ENCODE measurements at regions of chr11 and their contacts with region 1.

Region 1: GRCh38 chr11:45655347-45655756 is 10.1 kb downstream of the CHST1 start:
- DNase-seq: peak; percentile 50 to 91 (median 80)
- H3K4me3 ChIP-seq: no peak overlapping the region
- H3K27ac ChIP-seq: peak overlapping the region in 2 of 5 donors; percentile 8 to 32
- H3K4me1 ChIP-seq: peaks cover 0 to 19% of the 10 kb centered on the region in 2 donors
- H3K27me3 ChIP-seq: peaks cover 11% of the 10 kb centered on the region
- CTCF ChIP-seq: peak; percentile 72 to 95 (median 88)
- POLR2A ChIP-seq: no peak

Region 2: DNA sequence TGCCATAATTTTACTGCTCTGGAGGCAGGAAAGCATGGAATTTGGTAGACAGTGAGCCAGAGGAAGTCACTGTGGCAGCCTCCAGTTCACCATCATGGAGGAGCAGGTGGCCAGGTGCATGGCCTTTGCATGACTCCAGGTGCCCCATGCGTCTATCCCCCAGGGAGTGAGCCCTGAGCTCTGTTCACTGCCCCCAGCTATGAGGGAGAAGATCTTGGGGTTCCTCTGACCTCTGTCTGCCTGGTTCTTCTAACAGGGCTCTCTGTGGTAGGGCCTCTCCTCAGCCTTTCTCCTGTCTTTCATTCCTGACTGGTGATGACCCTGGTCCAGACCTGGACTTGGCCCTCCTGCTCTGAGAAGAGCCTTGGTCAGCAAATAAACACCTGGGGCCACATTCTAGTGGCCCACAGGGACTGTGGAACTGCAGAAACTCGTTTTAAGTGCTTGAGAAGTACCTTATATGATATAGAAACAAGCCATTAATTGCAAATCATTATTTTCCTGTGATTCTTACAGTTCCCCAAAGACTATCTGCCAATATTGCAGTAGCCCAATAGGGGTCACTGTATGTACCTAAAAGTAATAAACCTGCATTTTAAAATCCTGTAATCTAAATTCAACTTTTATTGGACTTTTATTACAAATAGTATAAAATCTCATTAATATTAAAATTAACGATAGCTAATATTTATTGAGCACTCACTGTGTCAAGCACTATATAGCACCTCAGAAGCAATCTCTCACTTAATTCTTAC is 249.3 kb before region 1 on chr11:
- intact Hi-C with region 1: loop called in 1 of 2 experiments (anchors 2 kb)
- DNase-seq: no peak
- H3K4me3 ChIP-seq: no peak overlapping the region
- H3K27ac ChIP-seq: no peak overlapping the region
- H3K4me1 ChIP-seq: no peaks in the 10 kb centered on the region
- H3K27me3 ChIP-seq: peaks cover 4% of the 10 kb centered on the region
- CTCF ChIP-seq: peak; percentile 35 to 67 (median 57)
- POLR2A ChIP-seq: no peak

Region 3: DNA sequence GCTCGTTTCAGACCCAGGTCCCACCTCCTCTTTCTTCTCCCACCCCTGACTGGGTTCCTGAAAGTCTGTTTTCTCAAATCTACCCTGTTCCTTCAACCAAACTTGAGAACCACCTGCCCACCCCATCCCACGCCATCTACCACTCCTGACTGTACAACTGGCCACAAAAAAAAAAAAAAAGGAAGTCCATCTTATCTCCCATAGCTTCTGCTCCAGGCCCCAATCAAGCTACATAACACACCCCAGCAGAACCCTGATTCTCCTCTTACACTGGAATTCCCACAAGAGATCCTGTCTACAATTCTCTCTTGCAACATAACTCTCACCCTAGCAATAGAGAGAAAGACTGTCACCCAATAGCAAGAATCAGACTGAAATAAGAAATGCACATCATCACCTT is 49.3 kb after region 1 on chr11:
- intact Hi-C with region 1: no loop called
- DNase-seq: no peak
- H3K4me3 ChIP-seq: no peak overlapping the region
- H3K27ac ChIP-seq: no peak overlapping the region
- H3K4me1 ChIP-seq: no peaks in the 10 kb centered on the region
- H3K27me3 ChIP-seq: peaks cover 4% of the 10 kb centered on the region
- CTCF ChIP-seq: no peak
- POLR2A ChIP-seq: no peak

Region 4: DNA sequence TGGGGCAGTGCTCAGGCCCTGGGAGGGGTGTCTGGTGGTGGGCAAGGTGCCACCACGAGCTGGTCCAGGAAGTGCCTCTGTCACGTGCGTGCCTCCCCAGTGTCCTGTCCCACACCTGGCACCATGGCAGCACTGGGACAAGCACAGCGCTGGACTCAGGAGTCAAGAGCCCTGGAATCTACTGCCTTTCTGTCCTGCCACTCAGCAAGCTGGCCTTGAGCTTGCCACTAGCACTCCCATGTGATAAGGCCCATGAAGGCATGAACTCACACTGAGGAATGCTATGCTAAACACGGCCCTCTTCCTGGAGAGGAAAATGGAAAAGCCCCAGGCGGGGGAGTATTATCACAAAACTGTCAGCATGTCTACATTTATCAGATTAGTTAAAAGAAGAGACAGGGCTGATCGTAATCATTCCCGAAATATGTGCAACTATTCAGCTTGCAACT is 98.9 kb after region 1 on chr11:
- intact Hi-C with region 1: loop called in 1 of 2 experiments (anchors 10 kb)
- DNase-seq: peak; percentile 28 to 84 (median 81)
- H3K4me3 ChIP-seq: no peak overlapping the region
- H3K27ac ChIP-seq: no peak overlapping the region
- H3K4me1 ChIP-seq: peaks cover 0 to 11% of the 10 kb centered on the region in 2 donors
- H3K27me3 ChIP-seq: no peaks in the 10 kb centered on the region
- CTCF ChIP-seq: no peak
- POLR2A ChIP-seq: no peak

Region 5: GRCh38 chr11:45771566-45772448 is 116.5 kb after region 1 on chr11:
- intact Hi-C with region 1: loop called in 1 of 2 experiments (anchors 5 kb)
- DNase-seq: peak; percentile 76 to 92 (median 87)
- H3K4me3 ChIP-seq: peak overlapping the region in 2 of 4 donors; percentile 15 to 54
- H3K27ac ChIP-seq: peak overlapping the region in 2 of 5 donors; percentile 10 to 36
- H3K4me1 ChIP-seq: no peaks in the 10 kb centered on the region
- H3K27me3 ChIP-seq: no peaks in the 10 kb centered on the region
- CTCF ChIP-seq: peak; percentile 84 to 95 (median 90)
- POLR2A ChIP-seq: no peak

Region 6: GRCh38 chr11:46006418-46007070 is 351.2 kb after region 1 on chr11:
- intact Hi-C with region 1: no loop called
- DNase-seq: peak in 3 of 7 donors; percentile 16 to 34 (median 30)
- H3K4me3 ChIP-seq: no peak overlapping the region
- H3K27ac ChIP-seq: no peak overlapping the region
- H3K4me1 ChIP-seq: peaks cover 0 to 53% of the 10 kb centered on the region in 2 donors
- H3K27me3 ChIP-seq: no peaks in the 10 kb centered on the region
- CTCF ChIP-seq: peak; percentile 42 to 78 (median 63)
- POLR2A ChIP-seq: no peak

Measured in adrenal gland (tissue), 19 donors.